ENCODE measurements at regions of chr5 and their contacts with region 1.

Region 1: DNA sequence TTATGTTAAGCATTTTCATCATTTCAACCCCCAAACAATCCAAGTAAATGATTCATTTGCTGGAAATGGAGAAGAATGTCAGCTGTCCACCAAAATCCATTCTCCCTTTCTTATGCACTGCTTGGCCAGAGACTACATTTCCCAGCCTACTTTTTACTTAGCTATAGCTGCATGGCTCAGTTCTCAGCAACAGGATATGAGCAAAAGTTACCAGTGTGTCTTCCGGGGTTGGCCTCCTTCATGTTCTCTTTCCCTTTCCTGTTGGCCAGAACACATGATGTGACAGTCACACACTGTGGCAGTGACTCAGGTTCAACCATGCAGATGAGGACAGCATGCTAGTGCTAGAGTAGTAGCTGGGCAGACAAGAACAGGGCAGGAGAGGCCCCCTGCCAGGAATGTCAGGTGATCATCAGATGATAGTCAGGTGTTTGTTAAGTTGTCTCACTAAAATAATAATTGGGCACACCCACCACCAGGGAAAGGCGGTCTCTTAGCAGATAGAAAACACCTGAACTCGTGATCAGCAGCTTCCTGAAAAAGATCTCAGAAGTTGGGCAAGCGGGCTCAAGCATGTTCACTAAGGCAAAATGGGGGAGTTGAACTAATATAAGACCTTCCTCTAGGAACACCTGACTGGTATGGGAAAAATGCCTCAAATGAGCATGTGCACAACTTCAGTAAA is 12.2 kb downstream of the GPR150 start:
- DNase-seq: peak; percentile 82
- H3K4me3 Mint-ChIP-seq: peak overlapping the region; percentile 1
- H3K27ac Mint-ChIP-seq: peak overlapping the region; percentile 95
- H3K4me1 Mint-ChIP-seq: peaks cover 23% of the 10 kb centered on the region
- H3K27me3 Mint-ChIP-seq: peaks cover 12% of the 10 kb centered on the region

Region 2: DNA sequence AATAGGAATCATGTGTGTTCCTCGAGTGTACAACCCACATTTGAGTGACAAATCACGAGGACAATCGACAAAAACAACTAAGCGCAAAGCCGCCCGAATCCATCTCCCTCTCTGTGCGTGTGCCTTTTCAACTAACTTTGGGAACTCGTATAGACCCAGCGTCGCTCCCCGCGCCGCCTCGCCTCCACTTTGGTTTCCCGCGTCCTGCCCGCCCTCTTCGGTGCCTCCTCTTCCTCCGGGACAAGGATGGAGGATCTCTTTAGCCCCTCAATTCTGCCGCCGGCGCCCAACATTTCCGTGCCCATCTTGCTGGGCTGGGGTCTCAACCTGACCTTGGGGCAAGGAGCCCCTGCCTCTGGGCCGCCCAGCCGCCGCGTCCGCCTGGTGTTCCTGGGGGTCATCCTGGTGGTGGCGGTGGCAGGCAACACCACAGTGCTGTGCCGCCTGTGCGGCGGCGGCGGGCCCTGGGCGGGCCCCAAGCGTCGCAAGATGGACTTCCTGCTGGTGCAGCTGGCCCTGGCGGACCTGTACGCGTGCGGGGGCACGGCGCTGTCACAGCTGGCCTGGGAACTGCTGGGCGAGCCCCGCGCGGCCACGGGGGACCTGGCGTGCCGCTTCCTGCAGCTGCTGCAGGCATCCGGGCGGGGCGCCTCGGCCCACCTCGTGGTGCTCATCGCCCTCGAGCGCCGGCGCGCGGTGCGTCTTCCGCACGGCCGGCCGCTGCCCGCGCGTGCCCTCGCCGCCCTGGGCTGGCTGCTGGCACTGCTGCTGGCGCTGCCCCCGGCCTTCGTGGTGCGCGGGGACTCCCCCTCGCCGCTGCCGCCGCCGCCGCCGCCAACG is 11.9 kb before region 1 on chr5 and contains the start of gene GPR150:
- CTCF ChIA-PET with region 1: interaction called, 15 read pairs
- POLR2A ChIA-PET with region 1: interaction called, 57 read pairs
- DNase-seq: peak; percentile 72
- H3K4me3 Mint-ChIP-seq: peak within 1 kb of the TSS; percentile 77
- H3K27ac Mint-ChIP-seq: peak within 1 kb of the TSS; percentile 31
- H3K4me1 Mint-ChIP-seq: peaks cover 45% of the 10 kb centered on the region
- H3K27me3 Mint-ChIP-seq: peaks cover 3% of the 10 kb centered on the region
- total RNA-seq, gene GPR150: 1.7 TPM

Measured in activated CD4-positive, alpha-beta memory T cell treated with anti-CD3 and anti-CD28 coated beads, Interleukin-2, amount 10 ng/mL, durations not matched to agents 7 days and 5 days (primary cell).